ENCODE measurements at regions of chr3 and their contacts with region 1.

Region 1: GRCh38 chr3:171829841-171830517 is 13.2 kb upstream of the TMEM212 start:
- DNase-seq: no peak
- ATAC-seq: peak; percentile 85
- H3K4me3 ChIP-seq: no peak overlapping the region
- H3K27ac ChIP-seq: no peak overlapping the region
- H3K4me1 ChIP-seq: no peaks in the 10 kb centered on the region
- H3K27me3 ChIP-seq: no peaks in the 10 kb centered on the region; a peak in 1 of 4 replicates
- CTCF ChIP-seq: peak; percentile 52 to 80 (median 74)
- EP300 ChIP-seq: no peak
- POLR2A ChIP-seq: no peak
- RAD21 ChIP-seq: peak; percentile 53

Region 2: GRCh38 chr3:171187706-171188290 is 642.2 kb before region 1 on chr3:
- CTCF ChIA-PET with region 1: interaction called, 3 read pairs
- POLR2A ChIA-PET with region 1: no interaction called
- RAD21 ChIA-PET with region 1: no interaction called
- SMC1A ChIA-PET with region 1: interaction called, 4 read pairs
- in situ Hi-C with region 1: no loop called
- intact Hi-C with region 1: loop called (anchors 10 kb)
- DNase-seq: no peak
- ATAC-seq: peak; percentile 59
- H3K4me3 ChIP-seq: no peak overlapping the region
- H3K27ac ChIP-seq: no peak overlapping the region
- H3K4me1 ChIP-seq: peaks cover 42% of the 10 kb centered on the region
- H3K27me3 ChIP-seq: no peaks in the 10 kb centered on the region
- CTCF ChIP-seq: peak; percentile 65 to 77 (median 68)
- EP300 ChIP-seq: no peak
- POLR2A ChIP-seq: no peak
- RAD21 ChIP-seq: peak; percentile 80

Region 3: DNA sequence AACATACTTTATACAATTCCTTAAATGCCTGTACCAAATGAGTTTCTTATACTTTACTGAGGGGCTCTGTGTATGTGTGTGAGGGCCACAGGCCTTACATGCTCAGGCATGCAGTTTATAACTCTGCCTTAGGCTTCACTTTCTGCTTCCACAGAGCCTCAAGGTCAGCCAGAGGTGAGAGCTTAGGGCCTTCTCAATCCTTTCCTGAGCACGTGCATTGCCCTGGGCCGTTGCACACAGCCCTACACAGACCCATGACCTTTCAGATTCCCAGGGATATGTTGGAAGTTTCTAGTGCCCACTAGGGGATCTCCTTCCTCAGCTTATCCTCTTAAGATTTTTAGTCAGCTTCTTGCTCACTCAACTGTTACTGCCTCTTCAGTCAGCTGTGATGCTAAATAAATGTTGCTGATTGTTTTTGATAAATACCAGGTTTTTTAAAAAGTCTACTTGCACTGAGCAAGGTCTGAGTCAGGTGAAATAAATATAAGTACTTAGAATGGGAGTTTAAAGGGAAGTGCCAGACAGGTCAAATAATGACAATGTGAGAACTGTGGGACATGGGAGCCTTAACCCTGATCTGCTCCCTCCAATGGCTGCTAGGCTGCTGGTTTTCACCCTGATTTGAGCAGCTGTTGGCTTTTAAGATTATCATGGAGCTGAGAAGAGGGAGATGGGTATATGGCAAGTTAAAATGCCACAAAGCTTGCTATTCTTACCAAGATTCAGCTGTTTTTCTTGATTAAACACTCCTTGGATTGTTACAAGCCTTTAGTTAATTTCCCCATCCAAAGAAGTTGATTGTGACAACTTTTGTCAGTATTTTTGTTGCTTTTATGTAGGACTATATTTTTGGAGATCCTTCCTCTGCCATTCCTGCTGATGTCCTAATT is 189.2 kb before region 1 on chr3:
- CTCF ChIA-PET with region 1: interaction called, 41 read pairs
- POLR2A ChIA-PET with region 1: interaction called, 5 read pairs
- RAD21 ChIA-PET with region 1: interaction called, 34 read pairs
- SMC1A ChIA-PET with region 1: interaction called, 44 read pairs
- in situ Hi-C with region 1: loop called (anchors 5 kb)
- intact Hi-C with region 1: no loop called
- DNase-seq: no peak
- ATAC-seq: peak; percentile 79
- H3K4me3 ChIP-seq: no peak overlapping the region
- H3K27ac ChIP-seq: no peak overlapping the region
- H3K4me1 ChIP-seq: no peaks in the 10 kb centered on the region
- H3K27me3 ChIP-seq: no peaks in the 10 kb centered on the region
- CTCF ChIP-seq: no peak
- EP300 ChIP-seq: no peak
- POLR2A ChIP-seq: no peak
- RAD21 ChIP-seq: no peak

Region 4: GRCh38 chr3:171703756-171704401 is 126.1 kb before region 1 on chr3:
- CTCF ChIA-PET with region 1: interaction called, 13 read pairs
- POLR2A ChIA-PET with region 1: no interaction called
- RAD21 ChIA-PET with region 1: interaction called, 6 read pairs
- SMC1A ChIA-PET with region 1: interaction called, 6 read pairs
- in situ Hi-C with region 1: no loop called
- intact Hi-C with region 1: loop called (anchors 5 kb)
- DNase-seq: no peak
- ATAC-seq: peak; percentile 74
- H3K4me3 ChIP-seq: no peak overlapping the region
- H3K27ac ChIP-seq: no peak overlapping the region
- H3K4me1 ChIP-seq: no peaks in the 10 kb centered on the region
- H3K27me3 ChIP-seq: no peaks in the 10 kb centered on the region; a peak in 1 of 4 replicates
- CTCF ChIP-seq: peak; percentile 24 to 63 (median 41); a peak in 4 of 6 replicates
- EP300 ChIP-seq: no peak
- POLR2A ChIP-seq: no peak
- RAD21 ChIP-seq: peak; percentile 55

Region 5: GRCh38 chr3:171765511-171765887 is 64.5 kb before region 1 on chr3:
- CTCF ChIA-PET with region 1: interaction called, 274 read pairs
- POLR2A ChIA-PET with region 1: interaction called, 6 read pairs
- RAD21 ChIA-PET with region 1: interaction called, 333 read pairs
- SMC1A ChIA-PET with region 1: interaction called, 154 read pairs
- in situ Hi-C with region 1: no loop called
- intact Hi-C with region 1: no loop called
- DNase-seq: no peak
- ATAC-seq: no peak
- H3K4me3 ChIP-seq: no peak overlapping the region
- H3K27ac ChIP-seq: no peak overlapping the region
- H3K4me1 ChIP-seq: no peaks in the 10 kb centered on the region
- H3K27me3 ChIP-seq: no peaks in the 10 kb centered on the region
- CTCF ChIP-seq: no peak
- EP300 ChIP-seq: no peak
- POLR2A ChIP-seq: no peak
- RAD21 ChIP-seq: no peak

Region 6: DNA sequence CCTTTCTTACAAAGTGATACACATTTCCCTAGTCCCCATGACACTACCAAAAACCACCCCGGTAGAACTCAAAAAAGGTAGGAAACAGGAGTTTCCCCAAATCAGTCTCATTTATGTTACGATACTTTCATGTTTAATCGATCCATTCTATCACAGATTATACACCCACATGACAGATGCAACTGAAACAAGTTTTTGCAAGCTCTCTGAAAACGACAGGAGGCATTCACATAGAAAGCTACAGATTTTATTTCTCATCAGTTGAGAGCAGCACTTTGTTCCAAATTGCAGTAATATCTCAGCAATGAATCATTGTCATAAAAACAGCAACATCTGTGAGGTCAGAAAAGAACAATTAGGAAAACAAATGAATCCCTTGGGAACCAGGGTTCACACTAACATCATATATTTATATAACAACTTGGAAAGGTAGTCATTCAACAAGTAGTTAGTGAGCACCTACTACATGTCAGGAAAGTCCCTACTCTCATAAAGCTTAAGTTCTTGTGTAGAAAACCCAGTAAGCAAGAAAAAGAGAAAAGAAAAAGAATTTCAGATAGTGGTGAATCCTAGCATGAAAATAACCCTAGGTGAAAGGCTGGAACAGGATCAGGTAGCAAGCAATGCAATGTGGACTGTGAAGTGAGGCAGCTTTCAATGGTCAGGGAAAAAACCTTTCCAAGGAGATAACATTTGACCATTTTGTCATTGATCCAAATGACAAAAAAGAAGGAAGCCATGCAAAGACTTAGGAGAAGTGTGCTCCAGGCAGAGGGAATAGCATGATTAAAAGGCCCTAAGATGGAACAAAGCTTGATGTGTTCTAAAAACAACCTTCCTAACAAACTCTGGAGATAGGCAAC is 28.0 kb before region 1 on chr3:
- CTCF ChIA-PET with region 1: interaction called, 76 read pairs
- POLR2A ChIA-PET with region 1: interaction called, 26 read pairs
- RAD21 ChIA-PET with region 1: interaction called, 117 read pairs
- SMC1A ChIA-PET with region 1: interaction called, 151 read pairs
- in situ Hi-C with region 1: no loop called
- intact Hi-C with region 1: loop called (anchors 1 kb)
- DNase-seq: peak; percentile 70
- ATAC-seq: peak; percentile 25
- H3K4me3 ChIP-seq: no peak overlapping the region
- H3K27ac ChIP-seq: peak overlapping the region; percentile 77
- H3K4me1 ChIP-seq: peaks cover 8% of the 10 kb centered on the region; the same call in 1 of the 2 replicates
- H3K27me3 ChIP-seq: no peaks in the 10 kb centered on the region
- CTCF ChIP-seq: no peak
- EP300 ChIP-seq: peak; percentile 59 to 78; a peak in 2 of 4 replicates
- POLR2A ChIP-seq: no peak
- RAD21 ChIP-seq: no peak

Measured in GM12878 (cell line).